ENCODE measurements at regions of chr1 and their contacts with region 1.

Region 1: DNA sequence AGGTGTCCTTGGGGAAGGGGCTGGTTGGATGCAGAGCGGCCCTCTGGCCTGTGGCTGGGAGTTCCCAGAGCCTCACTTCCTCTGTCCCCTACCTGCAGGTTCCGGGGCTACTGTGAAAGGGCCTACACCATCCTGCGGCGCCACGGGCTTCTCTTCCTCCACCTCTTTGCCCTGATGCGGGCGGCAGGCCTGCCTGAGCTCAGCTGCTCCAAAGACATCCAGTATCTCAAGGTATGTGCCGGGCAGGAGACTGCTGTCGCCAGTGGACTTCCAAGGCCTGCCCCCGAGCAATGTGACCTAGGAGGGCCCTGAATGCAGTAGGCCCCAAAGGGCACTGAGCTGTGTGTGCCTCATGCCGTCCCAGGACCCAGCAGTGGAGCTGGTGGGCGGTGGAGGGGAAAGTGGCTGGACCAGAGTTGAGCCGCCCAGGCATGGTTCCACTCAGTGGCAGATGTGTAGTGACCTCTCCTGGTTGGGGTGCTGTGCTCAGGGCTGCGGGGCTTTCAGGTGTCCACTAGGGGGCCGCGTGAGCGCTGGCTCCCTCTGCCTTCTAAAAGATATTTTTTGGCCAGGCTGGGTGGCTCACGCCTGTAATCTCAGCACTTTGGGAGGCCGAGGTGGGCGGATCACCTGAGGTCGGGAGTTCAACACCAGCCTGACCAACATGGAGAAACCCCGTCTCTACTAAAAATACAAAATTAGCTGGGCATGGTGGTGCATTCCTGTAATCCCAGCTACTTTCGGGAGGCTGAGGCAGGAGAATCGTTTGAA is 73.4 kb downstream of the PIK3CD start:
- DNase-seq: peak; percentile 80
- H3K4me3 Mint-ChIP-seq: no peak overlapping the region
- H3K27ac Mint-ChIP-seq: peak overlapping the region; percentile 52
- H3K4me1 Mint-ChIP-seq: peaks cover 48% of the 10 kb centered on the region
- H3K27me3 Mint-ChIP-seq: no peaks in the 10 kb centered on the region

Region 2: GRCh38 chr1:9539165-9539828 is 185.6 kb before region 1 on chr1 and contains the start of gene SLC25A33:
- CTCF ChIA-PET with region 1: no interaction called
- POLR2A ChIA-PET with region 1: no interaction called
- intact Hi-C with region 1: no loop called
- DNase-seq: peak; percentile 99
- H3K4me3 Mint-ChIP-seq: peak within 1 kb of the TSS; percentile 91
- H3K27ac Mint-ChIP-seq: peak within 1 kb of the TSS; percentile 77
- H3K4me1 Mint-ChIP-seq: peaks cover 33% of the 10 kb centered on the region
- H3K27me3 Mint-ChIP-seq: no peaks in the 10 kb centered on the region
- total RNA-seq, gene SLC25A33: 5.4 to 6.1 TPM

Region 3: GRCh38 chr1:9651565-9652378 is 73.1 kb before region 1 on chr1 and contains the start of gene PIK3CD:
- CTCF ChIA-PET with region 1: interaction called, 15 read pairs
- POLR2A ChIA-PET with region 1: no interaction called
- intact Hi-C with region 1: loop called (anchors 1 kb)
- DNase-seq: peak; percentile 61
- H3K4me3 Mint-ChIP-seq: peak within 1 kb of the TSS; percentile 97
- H3K27ac Mint-ChIP-seq: peak within 1 kb of the TSS; percentile 100
- H3K4me1 Mint-ChIP-seq: peaks cover 39% of the 10 kb centered on the region
- H3K27me3 Mint-ChIP-seq: no peaks in the 10 kb centered on the region
- total RNA-seq, gene PIK3CD: 129 to 138 TPM

Region 4: DNA sequence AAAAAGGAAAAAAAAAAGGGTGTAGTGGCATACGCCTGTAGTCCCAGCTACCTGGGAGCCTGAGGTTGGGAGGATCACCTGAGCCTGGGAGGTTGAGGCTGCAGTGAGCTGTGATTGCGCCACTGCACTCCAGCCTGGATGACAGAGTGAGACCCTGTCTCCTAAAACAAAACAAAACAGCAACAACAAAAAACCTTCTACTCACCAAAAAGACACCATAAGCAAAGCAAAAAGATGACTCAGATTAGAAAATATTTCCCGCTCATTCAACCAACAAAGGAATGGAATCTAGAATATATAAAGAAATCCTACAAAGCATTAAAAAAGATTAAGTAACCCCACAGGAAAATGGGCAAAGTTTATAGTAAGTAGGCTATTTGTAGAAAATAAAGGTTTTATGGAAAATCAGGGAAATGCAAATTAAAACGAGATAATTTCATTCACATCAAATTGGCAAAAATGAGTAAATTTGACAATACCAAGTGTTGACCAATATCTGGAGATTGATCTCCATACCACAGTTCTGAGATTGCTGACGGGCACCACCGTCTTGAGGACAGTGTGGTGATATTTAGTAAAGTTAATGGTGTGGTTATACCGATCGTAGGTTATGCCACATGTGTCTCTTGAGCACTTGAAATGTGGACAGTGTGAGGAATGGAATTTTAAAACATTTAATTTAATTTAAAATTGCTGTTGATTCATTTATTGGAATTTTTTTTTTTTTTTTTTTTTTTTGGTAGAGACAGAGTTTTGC is 19.4 kb before region 1 on chr1:
- CTCF ChIA-PET with region 1: interaction called, 12 read pairs
- POLR2A ChIA-PET with region 1: no interaction called
- intact Hi-C with region 1: no loop called
- DNase-seq: no peak
- H3K4me3 Mint-ChIP-seq: no peak overlapping the region
- H3K27ac Mint-ChIP-seq: peak overlapping the region; percentile 80
- H3K4me1 Mint-ChIP-seq: peaks cover 49% of the 10 kb centered on the region
- H3K27me3 Mint-ChIP-seq: no peaks in the 10 kb centered on the region

Region 5: GRCh38 chr1:9746211-9746610 is 21.3 kb after region 1 on chr1:
- CTCF ChIA-PET with region 1: no interaction called
- POLR2A ChIA-PET with region 1: no interaction called
- intact Hi-C with region 1: no loop called
- DNase-seq: no peak
- H3K4me3 Mint-ChIP-seq: no peak overlapping the region
- H3K27ac Mint-ChIP-seq: no peak overlapping the region
- H3K4me1 Mint-ChIP-seq: no peaks in the 10 kb centered on the region
- H3K27me3 Mint-ChIP-seq: no peaks in the 10 kb centered on the region

Region 6: DNA sequence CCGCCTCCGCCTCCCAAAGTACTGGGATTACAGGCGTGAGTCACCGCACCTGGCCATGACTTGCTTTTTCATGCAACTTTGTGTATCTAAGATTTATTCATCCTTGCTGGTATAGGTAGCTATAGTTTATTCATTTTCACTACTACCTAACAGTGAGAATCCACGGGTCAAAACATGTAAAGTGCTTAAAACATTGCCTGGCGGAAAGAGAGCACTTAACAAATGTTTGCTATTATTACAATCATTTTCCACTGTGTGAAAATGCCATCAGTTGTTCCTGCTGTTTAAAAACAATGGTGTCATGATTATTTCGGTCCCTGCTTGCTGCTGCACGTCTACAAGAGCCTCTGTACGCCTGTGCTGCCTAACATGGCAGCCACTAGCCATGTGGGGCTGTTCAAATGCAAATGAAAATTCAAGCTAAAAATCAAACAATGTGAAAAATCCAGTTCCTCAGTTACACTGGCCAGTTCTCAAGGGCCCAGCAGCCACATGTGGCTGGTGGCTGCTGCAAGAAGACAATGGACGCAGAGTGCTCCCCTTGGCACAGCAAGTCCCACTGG is 33.7 kb after region 1 on chr1:
- CTCF ChIA-PET with region 1: no interaction called
- POLR2A ChIA-PET with region 1: no interaction called
- intact Hi-C with region 1: no loop called
- DNase-seq: no peak
- H3K4me3 Mint-ChIP-seq: no peak overlapping the region
- H3K27ac Mint-ChIP-seq: no peak overlapping the region
- H3K4me1 Mint-ChIP-seq: peaks cover 9% of the 10 kb centered on the region
- H3K27me3 Mint-ChIP-seq: no peaks in the 10 kb centered on the region

Region 7: DNA sequence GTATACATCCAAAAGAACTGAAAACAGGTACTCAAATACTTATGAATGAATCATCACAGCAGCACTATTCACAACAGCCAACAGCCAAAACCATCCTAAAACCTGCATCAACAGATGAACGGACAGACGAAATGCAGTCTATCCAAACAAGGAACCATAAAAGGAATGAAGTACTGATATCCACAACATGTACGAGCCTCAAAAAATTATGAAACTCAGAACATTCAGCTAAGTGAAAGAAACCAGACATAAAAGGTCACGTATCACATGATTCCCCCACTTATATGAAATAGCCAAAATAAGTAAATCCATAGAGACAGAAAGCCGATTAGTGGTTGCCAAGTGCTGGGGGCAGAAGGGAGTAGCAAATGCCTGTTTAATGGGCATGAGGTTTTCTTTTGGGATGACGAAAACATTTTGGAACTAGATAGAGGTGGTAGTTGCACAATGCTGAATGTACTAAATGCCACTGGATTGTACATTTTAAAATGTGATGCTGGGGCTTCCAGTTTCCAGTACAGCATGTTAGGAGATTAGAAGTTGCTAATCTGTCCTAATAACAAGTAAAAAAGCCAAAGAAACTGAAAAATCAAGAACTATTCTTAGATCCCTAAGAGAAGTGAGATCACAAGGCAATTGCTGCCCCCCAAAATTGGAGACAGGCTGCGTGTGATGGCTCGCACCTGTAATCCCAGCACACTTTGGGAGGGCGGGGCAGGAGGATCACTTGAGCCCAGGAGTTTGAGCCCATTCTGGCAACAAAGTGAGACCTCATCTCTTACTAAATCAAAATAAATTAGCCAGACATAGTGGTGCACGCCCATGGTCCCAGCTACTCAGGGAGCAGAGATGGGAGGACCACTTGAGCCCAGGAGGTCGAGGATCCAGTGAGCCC is 73.6 kb after region 1 on chr1:
- CTCF ChIA-PET with region 1: no interaction called
- POLR2A ChIA-PET with region 1: no interaction called
- intact Hi-C with region 1: loop called (anchors 2 kb)
- DNase-seq: no peak
- H3K4me3 Mint-ChIP-seq: no peak overlapping the region
- H3K27ac Mint-ChIP-seq: no peak overlapping the region
- H3K4me1 Mint-ChIP-seq: peaks cover 49% of the 10 kb centered on the region
- H3K27me3 Mint-ChIP-seq: no peaks in the 10 kb centered on the region

Region 8: DNA sequence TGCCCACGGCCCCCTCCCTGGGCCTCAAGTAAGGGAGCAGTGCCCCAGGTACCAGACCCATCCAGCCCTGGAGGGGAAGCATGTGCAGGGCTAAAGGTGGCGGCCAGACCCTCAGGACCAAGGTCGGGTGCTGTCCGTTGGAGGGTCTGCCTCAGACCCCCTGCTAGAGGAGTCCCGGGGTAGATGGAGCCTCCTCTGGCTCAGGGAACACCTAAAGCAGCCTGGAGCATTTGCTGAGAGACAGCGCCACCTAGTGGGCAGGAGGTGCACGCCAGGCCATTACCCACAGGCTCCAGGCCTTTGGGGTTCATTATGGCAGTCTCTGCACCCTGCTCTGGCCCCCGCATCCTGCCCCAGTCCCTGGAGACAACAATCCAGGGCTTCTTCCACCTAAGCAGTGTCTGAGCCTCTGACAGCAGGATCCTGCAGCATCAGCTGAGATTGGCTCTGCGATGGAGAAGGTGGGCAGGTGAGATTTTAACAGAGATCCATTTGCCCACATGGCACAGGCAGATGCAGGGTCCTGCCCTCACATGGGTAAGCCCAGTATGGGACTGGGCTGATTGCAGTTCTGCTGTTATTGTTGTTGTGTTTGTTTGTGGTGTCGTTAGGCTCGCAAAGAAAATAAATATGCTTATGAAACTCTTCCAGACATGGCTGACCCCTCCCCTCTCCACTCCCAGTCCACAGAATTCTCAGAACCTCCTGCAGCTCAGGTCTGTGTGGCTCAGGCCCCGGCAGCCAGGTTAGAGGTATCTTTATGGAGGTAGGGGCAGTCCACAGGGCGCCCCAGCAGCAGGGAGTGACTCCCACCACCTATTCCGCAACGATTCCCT is 142.7 kb after region 1 on chr1:
- CTCF ChIA-PET with region 1: interaction called, 14 read pairs
- POLR2A ChIA-PET with region 1: no interaction called
- intact Hi-C with region 1: loop called (anchors 2 kb)
- DNase-seq: peak; percentile 92
- H3K4me3 Mint-ChIP-seq: no peak overlapping the region
- H3K27ac Mint-ChIP-seq: no peak overlapping the region
- H3K4me1 Mint-ChIP-seq: no peaks in the 10 kb centered on the region
- H3K27me3 Mint-ChIP-seq: no peaks in the 10 kb centered on the region

Region 9: DNA sequence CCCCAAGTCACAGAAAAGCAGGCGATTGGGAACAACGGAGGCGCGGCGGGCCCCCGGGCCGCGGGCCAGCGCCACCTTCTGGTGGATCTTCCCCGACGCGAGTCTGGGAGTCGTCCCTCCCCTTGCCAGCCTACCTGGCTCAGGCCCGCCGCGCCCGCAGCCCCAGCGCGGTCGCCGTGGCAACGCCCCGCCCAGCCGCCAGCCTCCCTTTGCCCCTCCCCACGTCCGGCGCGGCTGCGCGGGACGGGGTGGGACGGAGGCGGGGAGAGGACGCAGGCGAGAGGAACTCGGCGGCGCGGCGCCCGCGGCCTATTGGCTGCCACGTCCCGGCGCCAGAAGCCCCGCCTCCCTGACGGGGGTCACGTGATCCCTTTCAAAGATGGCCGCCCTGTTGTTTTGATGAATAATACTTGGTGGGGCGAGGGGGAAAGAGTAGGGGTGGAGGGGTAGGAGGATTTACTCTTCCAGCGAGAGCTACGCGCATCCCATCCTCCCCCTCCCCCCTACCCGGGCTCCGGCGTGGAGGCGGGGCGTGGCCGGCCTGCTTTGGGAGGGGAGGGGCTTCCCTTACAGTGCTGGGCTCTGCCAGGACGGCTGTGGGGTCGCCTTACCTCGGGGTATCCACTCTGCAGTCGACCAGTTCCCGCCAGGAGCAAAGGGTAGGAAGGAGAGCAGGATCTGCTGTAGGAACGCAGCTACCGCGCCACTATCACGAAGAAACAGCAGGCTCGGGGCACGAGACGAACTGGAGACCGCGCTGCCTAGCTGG is 307.9 kb after region 1 on chr1 and contains the start of gene UBE4B:
- CTCF ChIA-PET with region 1: no interaction called
- POLR2A ChIA-PET with region 1: no interaction called
- intact Hi-C with region 1: loop called (anchors 2 kb)
- DNase-seq: peak; percentile 99
- H3K4me3 Mint-ChIP-seq: peak within 1 kb of the TSS; percentile 95
- H3K27ac Mint-ChIP-seq: peak within 1 kb of the TSS; percentile 89
- H3K4me1 Mint-ChIP-seq: peaks cover 23% of the 10 kb centered on the region
- H3K27me3 Mint-ChIP-seq: no peaks in the 10 kb centered on the region
- total RNA-seq, gene UBE4B: 24.3 to 25.3 TPM